ENCODE measurements at regions of chr14 and their contacts with region 1.

Region 1: GRCh38 chr14:75088574-75089373 is 19.3 kb downstream of the ZC2HC1C start:
- DNase-seq: peak in 3 of 10 donors; percentile 10 to 35 (median 17)
- H3K4me3 ChIP-seq: no peak overlapping the region
- H3K27ac ChIP-seq: peak overlapping the region in 18 of 59 donors; percentile 8 to 62 (median 36)
- H3K27me3 ChIP-seq: no peaks in the 10 kb centered on the region
- CTCF ChIP-seq: peak; percentile 53 to 94 (median 80)

Region 2: GRCh38 chr14:74860906-74861733 is 227.7 kb before region 1 on chr14:
- intact Hi-C with region 1: loop called in 1 of 2 experiments (anchors 2 kb)
- DNase-seq: peak; percentile 80 to 96 (median 88)
- H3K4me3 ChIP-seq: no peak overlapping the region
- H3K27ac ChIP-seq: no peak overlapping the region
- H3K27me3 ChIP-seq: no peaks in the 10 kb centered on the region
- CTCF ChIP-seq: peak; percentile 66 to 95 (median 88)

Region 3: DNA sequence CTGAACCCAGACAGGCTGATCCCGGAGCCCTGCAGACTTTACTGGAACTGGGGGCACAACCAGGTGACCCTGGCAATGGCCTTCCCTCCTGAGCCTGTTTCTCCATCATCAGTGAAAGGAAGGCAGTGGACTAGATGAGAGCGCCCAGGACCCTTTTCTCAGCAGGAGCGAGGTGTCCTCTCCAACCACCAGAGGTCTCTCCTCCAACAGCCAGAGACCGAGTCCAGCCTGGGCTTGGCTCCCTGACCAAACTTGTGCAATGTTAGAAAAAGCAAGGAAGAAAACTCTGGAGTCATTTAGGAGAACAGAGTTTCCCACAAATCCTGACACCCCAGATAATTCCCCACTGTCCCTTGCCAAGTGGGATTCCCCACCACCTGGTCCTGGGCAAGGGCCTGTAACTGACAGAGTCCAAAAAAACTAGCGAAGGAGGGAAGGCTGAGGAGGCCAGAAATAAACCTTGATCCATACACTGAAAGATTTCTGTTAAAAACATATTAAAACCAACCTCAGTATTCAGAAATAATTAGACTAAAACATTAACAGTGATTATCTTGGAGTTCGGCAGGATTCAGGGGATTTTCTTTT is 174.7 kb before region 1 on chr14:
- intact Hi-C with region 1: loop called in 1 of 2 experiments (anchors 2 kb)
- DNase-seq: peak in 6 of 10 donors; percentile 58 to 72 (median 67)
- H3K4me3 ChIP-seq: no peak overlapping the region
- H3K27ac ChIP-seq: peak overlapping the region in 50 of 59 donors; percentile 0 to 84 (median 52)
- H3K27me3 ChIP-seq: no peaks in the 10 kb centered on the region
- CTCF ChIP-seq: peak; percentile 20 to 85 (median 70)

Region 4: GRCh38 chr14:74945823-74946682 is 142.7 kb before region 1 on chr14:
- intact Hi-C with region 1: loop called in 1 of 2 experiments (anchors 2 kb)
- DNase-seq: peak in 9 of 10 donors; percentile 63 to 82 (median 73)
- H3K4me3 ChIP-seq: peak overlapping the region in 20 of 59 donors; percentile 0 to 40 (median 18)
- H3K27ac ChIP-seq: peak overlapping the region in 33 of 59 donors; percentile 0 to 76 (median 50)
- H3K27me3 ChIP-seq: peaks cover 0 to 7% (median 0%) of the 10 kb centered on the region in 45 donors
- CTCF ChIP-seq: peak; percentile 53 to 95 (median 91)